GM12878 (cell line): ENCODE measurements at regions of chr5 and their contacts with region 1.

Region 1: GRCh38 chr5:57338068-57338892 is 144.3 kb downstream of the ACTBL2 start:
- DNase-seq: no peak
- ATAC-seq: peak; percentile 85
- H3K4me3 ChIP-seq: no peak overlapping the region
- H3K27ac ChIP-seq: no peak overlapping the region
- H3K4me1 ChIP-seq: no peaks in the 10 kb centered on the region
- H3K27me3 ChIP-seq: no peaks in the 10 kb centered on the region
- CTCF ChIP-seq: peak; percentile 46 to 57 (median 50)
- EP300 ChIP-seq: no peak
- POLR2A ChIP-seq: no peak
- RAD21 ChIP-seq: 0 out of 2 replicates have a peak, but pooled peaks have one; percentile 4

Region 2: DNA sequence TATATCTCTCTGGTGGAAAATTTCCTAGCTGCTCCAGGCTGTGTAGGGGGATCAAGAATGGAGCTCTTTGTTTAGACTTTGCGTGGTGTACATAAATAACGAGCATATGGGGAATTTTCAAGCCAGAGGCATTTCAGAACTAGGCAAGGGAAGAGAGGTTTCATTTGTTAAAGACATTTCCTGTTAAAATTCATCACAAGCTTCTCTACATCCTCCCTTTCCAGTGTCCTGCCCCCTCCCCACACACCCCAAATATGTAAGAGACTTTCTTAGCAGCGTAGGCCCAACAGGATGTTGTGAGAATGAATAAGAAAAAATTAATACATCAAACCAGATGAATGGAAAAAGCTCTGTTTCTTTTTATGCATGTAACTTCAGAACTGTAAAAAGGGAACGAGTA is 14.1 kb before region 1 on chr5:
- CTCF ChIA-PET with region 1: interaction called, 13 read pairs
- POLR2A ChIA-PET with region 1: no interaction called
- RAD21 ChIA-PET with region 1: no interaction called
- SMC1A ChIA-PET with region 1: interaction called, 4 read pairs
- in situ Hi-C with region 1: no loop called
- intact Hi-C with region 1: no loop called
- DNase-seq: no peak
- ATAC-seq: no peak
- H3K4me3 ChIP-seq: no peak overlapping the region
- H3K27ac ChIP-seq: no peak overlapping the region
- H3K4me1 ChIP-seq: no peaks in the 10 kb centered on the region
- H3K27me3 ChIP-seq: peaks cover 0 to 2% of the 10 kb centered on the region in 2 experiments; a peak in 2 of 4 replicates
- CTCF ChIP-seq: no peak
- EP300 ChIP-seq: no peak
- POLR2A ChIP-seq: no peak
- RAD21 ChIP-seq: no peak

Region 3: GRCh38 chr5:57442080-57442839 is 104.0 kb after region 1 on chr5:
- CTCF ChIA-PET with region 1: interaction called, 5 read pairs
- POLR2A ChIA-PET with region 1: no interaction called
- RAD21 ChIA-PET with region 1: interaction called, 11 read pairs
- SMC1A ChIA-PET with region 1: interaction called, 10 read pairs
- in situ Hi-C with region 1: no loop called
- intact Hi-C with region 1: no loop called
- DNase-seq: no peak
- ATAC-seq: no peak
- H3K4me3 ChIP-seq: no peak overlapping the region
- H3K27ac ChIP-seq: no peak overlapping the region
- H3K4me1 ChIP-seq: no peaks in the 10 kb centered on the region; the same call in 1 of the 2 replicates
- H3K27me3 ChIP-seq: peaks cover 0 to 3% of the 10 kb centered on the region in 2 experiments; a peak in 1 of 4 replicates
- CTCF ChIP-seq: no peak
- EP300 ChIP-seq: no peak
- POLR2A ChIP-seq: no peak
- RAD21 ChIP-seq: no peak